Dendritic cell treated with granulocyte-macrophage colony-stimulating factor and Interleukin-4, amounts not matched to agents 40 ng/mL and 50 ng/mL, for 4 days (primary cell): ENCODE measurements at regions of chr2 and their contacts with region 1.

Region 1: GRCh38 chr2:222057347-222058073 is 241.3 kb downstream of the PAX3 start:
- H3K4me3 Mint-ChIP-seq: no peak overlapping the region
- H3K27ac Mint-ChIP-seq: no peak overlapping the region
- H3K4me1 Mint-ChIP-seq: no peaks in the 10 kb centered on the region
- H3K27me3 Mint-ChIP-seq: peaks cover 28% of the 10 kb centered on the region

Region 2: DNA sequence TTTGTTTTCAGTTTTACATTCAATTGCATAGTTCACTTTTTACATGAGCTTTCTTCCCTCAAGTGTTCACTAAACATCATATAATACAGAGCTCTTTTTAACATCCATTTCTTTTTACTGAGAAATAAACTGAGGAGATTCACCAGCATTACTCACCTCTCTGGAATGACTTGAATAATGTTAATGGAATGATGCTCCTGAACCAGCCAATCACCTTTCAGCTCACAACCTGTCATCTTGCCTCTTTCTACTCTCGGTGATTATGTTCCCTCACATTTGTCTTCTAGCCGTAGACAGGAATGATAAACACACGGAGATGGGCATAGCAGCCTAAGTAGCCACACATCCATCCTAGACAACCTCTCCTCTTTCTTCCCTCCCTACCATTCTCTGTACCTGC is 60.4 kb before region 1 on chr2:
- intact Hi-C with region 1: no loop called
- H3K4me3 Mint-ChIP-seq: no peak overlapping the region
- H3K27ac Mint-ChIP-seq: no peak overlapping the region
- H3K4me1 Mint-ChIP-seq: no peaks in the 10 kb centered on the region
- H3K27me3 Mint-ChIP-seq: no peaks in the 10 kb centered on the region

Region 3: GRCh38 chr2:222100704-222101699 is 43.5 kb after region 1 on chr2:
- intact Hi-C with region 1: no loop called
- H3K4me3 Mint-ChIP-seq: no peak overlapping the region
- H3K27ac Mint-ChIP-seq: no peak overlapping the region
- H3K4me1 Mint-ChIP-seq: no peaks in the 10 kb centered on the region
- H3K27me3 Mint-ChIP-seq: no peaks in the 10 kb centered on the region

Region 4: DNA sequence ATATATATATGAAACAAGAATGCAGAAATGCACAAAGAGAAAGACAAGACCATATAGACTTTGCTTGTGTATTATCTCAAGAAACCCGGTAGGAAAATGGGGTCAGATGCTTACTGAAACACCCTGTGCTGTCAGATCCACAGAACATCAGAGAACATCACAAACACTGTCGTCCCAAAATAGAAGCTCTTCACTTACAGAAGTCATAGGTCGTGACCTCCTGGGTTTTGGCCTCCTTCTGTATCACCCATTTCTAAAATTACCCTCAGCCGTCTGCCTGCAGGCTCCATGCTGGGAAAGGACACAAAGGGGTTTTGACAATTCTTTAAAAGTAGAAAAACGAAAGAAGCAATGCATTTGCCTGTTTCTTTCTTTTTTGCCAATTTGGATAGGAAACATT is 103.4 kb after region 1 on chr2:
- intact Hi-C with region 1: no loop called
- H3K4me3 Mint-ChIP-seq: no peak overlapping the region
- H3K27ac Mint-ChIP-seq: no peak overlapping the region
- H3K4me1 Mint-ChIP-seq: no peaks in the 10 kb centered on the region
- H3K27me3 Mint-ChIP-seq: no peaks in the 10 kb centered on the region

Region 5: GRCh38 chr2:222483513-222484039 is 426.1 kb after region 1 on chr2:
- intact Hi-C with region 1: loop called (anchors 2 kb)
- H3K4me3 Mint-ChIP-seq: no peak overlapping the region
- H3K27ac Mint-ChIP-seq: no peak overlapping the region
- H3K4me1 Mint-ChIP-seq: no peaks in the 10 kb centered on the region
- H3K27me3 Mint-ChIP-seq: peaks cover 16% of the 10 kb centered on the region

Region 6: GRCh38 chr2:222561817-222562645 is 504.5 kb after region 1 on chr2:
- intact Hi-C with region 1: loop called (anchors 1 kb)
- H3K4me3 Mint-ChIP-seq: no peak overlapping the region
- H3K27ac Mint-ChIP-seq: no peak overlapping the region
- H3K4me1 Mint-ChIP-seq: no peaks in the 10 kb centered on the region
- H3K27me3 Mint-ChIP-seq: peaks cover 3% of the 10 kb centered on the region

Region 7: GRCh38 chr2:222613715-222614331 is 556.3 kb after region 1 on chr2:
- intact Hi-C with region 1: loop called (anchors 2 kb)
- H3K4me3 Mint-ChIP-seq: no peak overlapping the region
- H3K27ac Mint-ChIP-seq: no peak overlapping the region
- H3K4me1 Mint-ChIP-seq: no peaks in the 10 kb centered on the region
- H3K27me3 Mint-ChIP-seq: no peaks in the 10 kb centered on the region